ENCODE measurements at regions of chr3 and their contacts with region 1.

Region 1: GRCh38 chr3:48273594-48274211 is 32.8 kb downstream of the ZNF589 start:
- DNase-seq: peak in 4 of 6 donors; percentile 38 to 73 (median 46)
- ATAC-seq: peak; percentile 77 to 95 (median 91)
- H3K4me3 ChIP-seq: peak overlapping the region in 1 of 4 donors; percentile 11
- H3K27ac ChIP-seq: no peak overlapping the region
- H3K4me1 ChIP-seq: peaks cover 5 to 10% (median 9%) of the 10 kb centered on the region in 3 donors
- H3K27me3 ChIP-seq: no peaks in the 10 kb centered on the region
- CTCF ChIP-seq: peak; percentile 53 to 68 (median 64)

Region 2: GRCh38 chr3:48400824-48401433 is 127.2 kb after region 1 on chr3:
- intact Hi-C with region 1: loop called in 1 of 3 experiments (anchors 10 kb)
- DNase-seq: peak in 4 of 6 donors; percentile 50 to 71 (median 59)
- ATAC-seq: peak; percentile 70 to 81 (median 77)
- H3K4me3 ChIP-seq: no peak overlapping the region
- H3K27ac ChIP-seq: no peak overlapping the region
- H3K4me1 ChIP-seq: peaks cover 5 to 11% (median 11%) of the 10 kb centered on the region in 3 donors
- H3K27me3 ChIP-seq: no peaks in the 10 kb centered on the region
- CTCF ChIP-seq: peak; percentile 68 to 80 (median 72)

Region 3: DNA sequence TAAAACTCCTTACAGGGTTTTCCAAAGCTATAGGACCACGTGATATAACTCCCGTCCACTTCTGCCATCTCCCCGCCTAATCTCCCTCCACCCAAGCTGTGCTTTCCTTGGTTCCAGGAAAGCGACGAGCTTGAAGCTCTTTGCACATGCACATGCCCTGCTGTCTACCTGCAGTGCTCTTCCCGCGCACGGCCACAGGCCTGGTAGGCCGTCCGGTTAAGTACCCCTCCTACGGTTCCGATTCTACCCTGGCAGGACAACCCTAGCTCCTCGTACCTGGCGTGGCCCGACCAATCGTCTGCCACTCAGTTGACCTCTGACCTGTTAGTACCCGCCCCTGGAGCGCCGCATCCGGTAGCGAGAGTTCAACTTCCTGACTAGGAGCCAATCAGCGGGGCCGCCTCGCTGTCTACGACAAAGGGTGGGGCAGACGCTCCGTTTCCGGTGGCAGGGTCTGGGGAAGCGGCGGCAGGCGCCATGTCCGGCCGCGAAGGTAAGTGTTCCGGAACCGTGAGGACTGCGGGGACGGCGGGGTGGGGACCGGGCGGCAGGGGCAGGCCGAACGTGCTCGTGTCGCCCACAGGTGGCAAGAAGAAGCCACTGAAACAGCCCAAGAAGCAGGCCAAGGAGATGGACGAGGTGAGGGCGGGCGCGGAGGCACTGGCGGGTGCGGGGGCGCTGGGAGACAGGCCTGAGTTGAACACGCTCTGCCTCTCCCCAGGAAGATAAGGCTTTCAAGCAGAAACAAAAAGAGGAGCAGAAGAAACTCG is 166.3 kb after region 1 on chr3 and contains the starts of genes CCDC51 and TMA7:
- intact Hi-C with region 1: loop called (anchors 2 to 10 kb)
- DNase-seq: peak; percentile 98 to 100 (median 98)
- ATAC-seq: peak; percentile 94 to 99 (median 96)
- H3K4me3 ChIP-seq: peak within 1 kb of the TSS; percentile 53 to 75 (median 68)
- H3K27ac ChIP-seq: peak within 1 kb of the TSS; percentile 65 to 81 (median 74)
- H3K4me1 ChIP-seq: peaks cover 8 to 13% (median 13%) of the 10 kb centered on the region in 3 donors
- H3K27me3 ChIP-seq: no peaks in the 10 kb centered on the region
- CTCF ChIP-seq: no peak
- total RNA-seq, gene CCDC51: 1.6 to 4.3 (median 3.3) TPM
- total RNA-seq, gene TMA7: 59.0 to 83.8 (median 68.0) TPM

Region 4: DNA sequence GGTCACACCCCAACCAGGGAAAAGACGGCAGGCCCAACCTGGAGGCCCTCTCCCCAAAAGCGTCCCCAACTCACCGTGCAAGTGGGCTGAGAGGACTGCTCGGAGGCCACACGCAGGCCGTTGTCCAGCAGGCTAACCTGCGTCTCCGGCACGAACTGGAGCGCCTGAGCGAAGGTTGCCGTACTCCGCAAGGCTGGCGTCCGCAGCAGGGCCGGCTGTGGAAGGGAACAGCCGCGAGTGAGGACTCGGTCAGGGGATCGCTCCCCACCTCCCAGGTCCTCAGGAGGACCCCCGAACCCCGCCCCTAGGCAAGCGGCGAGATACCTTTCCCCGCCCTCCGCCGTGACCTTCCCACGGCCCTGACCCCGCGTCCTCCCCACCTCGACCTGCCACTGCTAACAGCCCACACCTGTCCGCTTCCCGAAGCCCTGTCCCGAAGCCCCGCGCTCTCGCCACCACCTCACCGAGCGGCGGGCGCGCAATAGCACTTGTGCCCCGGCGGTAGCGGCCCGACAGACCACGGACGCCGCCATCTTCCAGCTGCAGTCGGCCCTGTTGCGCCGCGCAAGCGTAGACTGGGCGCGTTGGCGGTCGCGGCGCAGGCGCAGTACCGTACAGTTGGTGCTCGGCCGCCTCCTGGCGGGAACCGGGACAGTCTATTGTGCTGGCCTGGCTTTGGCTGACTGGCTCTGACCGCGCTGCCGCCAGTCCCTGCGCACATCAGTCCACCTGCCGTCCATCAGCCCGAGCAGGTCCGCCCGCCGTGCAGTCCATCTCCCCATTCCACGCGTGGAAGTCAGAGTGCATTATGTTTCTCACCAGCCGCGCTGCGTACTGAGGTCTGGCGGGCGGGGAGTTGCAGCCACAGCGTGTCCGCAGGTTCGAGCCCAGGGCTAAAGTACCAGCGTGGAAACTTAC is 335.6 kb after region 1 on chr3 and contains the start of gene UQCRC1:
- intact Hi-C with region 1: no loop called
- DNase-seq: peak; percentile 87 to 98 (median 94)
- ATAC-seq: peak; percentile 99 to 100 (median 100)
- H3K4me3 ChIP-seq: peak within 1 kb of the TSS; percentile 64 to 94 (median 84)
- H3K27ac ChIP-seq: peak within 1 kb of the TSS; percentile 66 to 77 (median 70)
- H3K4me1 ChIP-seq: peaks cover 8% of the 10 kb centered on the region in 3 donors
- H3K27me3 ChIP-seq: no peaks in the 10 kb centered on the region
- CTCF ChIP-seq: peak; percentile 55 to 77 (median 70)
- total RNA-seq, gene UQCRC1: 78.6 to 113 (median 97.4) TPM

Measured in pancreas (tissue), 10 donors.